K562 (cell line): ENCODE measurements at regions of chr9 and their contacts with region 1.

Region 1: DNA sequence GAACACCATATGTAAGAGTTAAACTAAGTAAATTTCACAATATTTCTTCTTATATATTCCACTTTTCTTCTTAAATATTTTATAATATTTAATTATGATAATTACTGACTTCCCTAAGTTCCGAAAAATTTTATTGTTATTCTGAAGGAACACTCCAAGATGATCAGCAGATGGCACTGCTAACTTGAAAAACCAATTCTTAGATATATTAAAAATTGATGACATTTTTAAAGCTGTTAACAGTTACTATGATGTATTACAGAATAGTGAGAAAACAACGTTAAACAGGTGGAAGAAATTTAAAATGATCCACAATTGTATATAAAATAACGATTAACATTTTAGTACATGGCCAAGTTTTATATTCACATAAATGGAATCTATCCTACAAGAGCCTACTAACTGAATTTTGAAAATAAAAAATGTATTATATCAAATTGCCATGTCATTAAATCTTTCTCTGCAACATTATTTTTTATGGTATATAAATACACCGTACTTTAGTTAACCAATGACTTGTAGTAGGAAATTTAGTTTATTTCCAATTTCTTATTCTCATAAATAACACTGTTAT is 30.1 kb upstream of the MUSK start:
- DNase-seq: no peak
- ATAC-seq: no peak
- H3K4me3 ChIP-seq: no peak overlapping the region
- H3K27ac ChIP-seq: no peak overlapping the region
- H3K4me1 ChIP-seq: no peaks in the 10 kb centered on the region
- H3K27me3 ChIP-seq: no peaks in the 10 kb centered on the region
- CTCF ChIP-seq: peak in 1 of 3 experiments; percentile 9; a peak in 1 of 6 replicates
- EP300 ChIP-seq: no peak
- POLR2A ChIP-seq: no peak
- RAD21 ChIP-seq: peak in 1 of 2 experiments; percentile 30; a peak in 2 of 4 replicates

Region 2: GRCh38 chr9:110410961-110411360 is 227.5 kb before region 1 on chr9:
- CTCF ChIA-PET with region 1: no interaction called
- POLR2A ChIA-PET with region 1: no interaction called
- in situ Hi-C with region 1: no loop called
- intact Hi-C with region 1: no loop called
- DNase-seq: no peak
- ATAC-seq: no peak
- H3K4me3 ChIP-seq: no peak overlapping the region
- H3K27ac ChIP-seq: no peak overlapping the region
- H3K4me1 ChIP-seq: no peaks in the 10 kb centered on the region
- H3K27me3 ChIP-seq: no peaks in the 10 kb centered on the region; a peak in 1 of 5 replicates
- CTCF ChIP-seq: no peak
- EP300 ChIP-seq: no peak
- POLR2A ChIP-seq: no peak
- RAD21 ChIP-seq: no peak

Region 3: DNA sequence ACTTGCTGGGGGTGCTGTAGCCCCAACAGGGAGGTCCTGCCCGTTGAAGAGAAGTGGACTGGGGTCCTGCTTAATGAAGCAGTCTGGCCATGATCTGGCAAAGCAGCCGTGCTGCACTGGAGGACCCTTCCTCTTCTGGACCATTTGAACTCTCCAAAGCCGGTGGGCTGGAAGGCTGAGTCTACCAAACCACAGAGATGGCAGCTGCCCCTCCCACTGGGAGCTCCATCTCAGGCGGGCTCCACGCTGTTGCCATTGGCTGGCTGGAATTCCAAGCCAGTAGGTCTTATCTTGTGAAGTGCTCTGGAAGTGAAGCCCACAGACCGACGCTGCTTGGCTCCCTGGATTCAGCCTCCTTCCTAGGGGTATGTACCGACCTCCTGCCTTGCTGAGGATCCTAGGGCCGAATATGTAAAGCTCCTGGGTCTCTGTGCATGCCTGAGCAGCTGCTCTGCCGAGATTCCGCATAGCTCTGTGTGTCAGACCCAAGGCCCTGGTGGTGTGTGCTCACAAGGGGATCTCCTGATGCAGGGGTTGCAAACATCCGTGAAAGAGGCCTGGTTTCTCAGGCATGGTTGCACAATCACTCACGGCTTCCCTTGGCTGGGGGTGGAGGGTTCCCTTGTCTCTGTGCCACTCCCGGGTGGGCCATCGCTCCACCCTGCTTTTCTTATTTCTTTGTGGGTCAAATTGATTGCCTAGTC is 39.2 kb before region 1 on chr9:
- CTCF ChIA-PET with region 1: no interaction called
- POLR2A ChIA-PET with region 1: no interaction called
- in situ Hi-C with region 1: no loop called
- intact Hi-C with region 1: no loop called
- DNase-seq: no peak
- ATAC-seq: no peak
- H3K4me3 ChIP-seq: no peak overlapping the region
- H3K27ac ChIP-seq: no peak overlapping the region
- H3K4me1 ChIP-seq: no peaks in the 10 kb centered on the region
- H3K27me3 ChIP-seq: no peaks in the 10 kb centered on the region
- CTCF ChIP-seq: no peak
- EP300 ChIP-seq: no peak
- POLR2A ChIP-seq: no peak
- RAD21 ChIP-seq: no peak

Region 4: DNA sequence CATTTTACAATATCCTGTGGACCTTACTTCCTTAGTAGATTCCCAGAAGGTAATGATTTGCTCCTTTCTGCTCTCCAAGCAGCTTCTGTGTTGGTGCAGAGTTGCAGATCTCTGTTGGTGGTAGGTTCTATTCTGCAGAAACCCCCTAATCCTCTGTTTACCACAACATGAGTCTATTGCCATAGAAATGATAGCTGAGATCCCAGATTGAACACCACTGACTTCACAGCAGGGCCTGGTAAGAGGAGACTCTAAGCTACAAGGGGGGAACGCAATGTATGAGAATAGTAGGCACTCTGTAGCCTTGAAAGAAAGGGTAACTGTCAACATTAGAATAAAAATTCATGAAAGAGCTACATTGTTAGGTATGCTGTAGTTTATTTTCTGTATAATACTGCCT is 89.6 kb after region 1 on chr9:
- CTCF ChIA-PET with region 1: no interaction called
- POLR2A ChIA-PET with region 1: no interaction called
- in situ Hi-C with region 1: no loop called
- intact Hi-C with region 1: no loop called
- DNase-seq: no peak
- ATAC-seq: no peak
- H3K4me3 ChIP-seq: no peak overlapping the region
- H3K27ac ChIP-seq: no peak overlapping the region
- H3K4me1 ChIP-seq: no peaks in the 10 kb centered on the region
- H3K27me3 ChIP-seq: no peaks in the 10 kb centered on the region
- CTCF ChIP-seq: no peak
- EP300 ChIP-seq: no peak
- POLR2A ChIP-seq: no peak
- RAD21 ChIP-seq: no peak

Region 5: DNA sequence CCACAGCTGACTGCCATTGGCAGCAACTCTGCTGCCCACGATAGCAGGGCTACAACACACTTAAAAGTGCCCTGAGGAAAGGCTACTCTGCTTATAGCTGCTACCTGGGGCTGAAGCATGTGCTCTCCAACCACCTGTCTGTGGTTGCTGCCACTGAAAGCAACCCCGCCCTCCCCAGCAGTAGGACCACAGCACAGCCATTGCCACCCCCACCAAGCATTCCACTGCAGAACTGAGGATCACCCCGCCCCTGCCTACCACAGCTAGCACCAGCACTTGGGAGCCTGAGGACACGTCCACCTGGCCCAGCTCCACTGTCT is 314.0 kb after region 1 on chr9:
- CTCF ChIA-PET with region 1: no interaction called
- POLR2A ChIA-PET with region 1: no interaction called
- in situ Hi-C with region 1: no loop called
- intact Hi-C with region 1: no loop called
- DNase-seq: no peak
- ATAC-seq: no peak
- H3K4me3 ChIP-seq: no peak overlapping the region
- H3K27ac ChIP-seq: no peak overlapping the region
- H3K4me1 ChIP-seq: no peaks in the 10 kb centered on the region
- H3K27me3 ChIP-seq: no peaks in the 10 kb centered on the region
- CTCF ChIP-seq: no peak
- EP300 ChIP-seq: no peak
- POLR2A ChIP-seq: no peak
- RAD21 ChIP-seq: no peak

Region 6: DNA sequence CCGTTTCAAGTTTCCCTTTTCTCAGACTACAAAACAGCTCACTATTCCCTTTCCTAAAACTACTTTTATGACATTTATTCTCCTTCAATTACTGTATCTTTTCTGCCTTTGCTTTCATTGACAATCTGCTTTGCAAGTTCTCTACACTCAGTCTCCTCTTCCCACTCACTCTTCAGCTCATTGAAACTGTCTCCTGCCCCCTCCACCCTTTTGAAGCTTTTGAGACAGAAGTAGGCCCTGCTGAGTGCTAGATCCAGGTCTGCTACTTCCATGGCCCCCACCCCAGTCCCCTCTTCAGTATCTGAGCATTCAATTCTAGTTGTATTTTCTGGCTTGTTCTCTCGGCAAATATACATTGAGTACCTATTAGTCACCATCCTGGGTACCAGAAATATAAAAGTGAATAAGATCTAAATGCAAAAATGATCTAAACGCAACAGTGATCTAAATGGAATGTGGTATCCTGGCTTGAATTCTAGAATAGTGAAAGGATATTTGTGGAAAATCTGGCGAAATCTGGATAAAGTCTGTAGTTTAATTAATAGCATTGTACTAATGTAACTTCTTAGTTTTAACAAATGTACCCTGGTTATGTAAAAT is 633.1 kb after region 1 on chr9:
- CTCF ChIA-PET with region 1: no interaction called
- POLR2A ChIA-PET with region 1: no interaction called
- in situ Hi-C with region 1: no loop called
- intact Hi-C with region 1: loop called (anchors 10 kb)
- DNase-seq: no peak
- ATAC-seq: no peak
- H3K4me3 ChIP-seq: no peak overlapping the region
- H3K27ac ChIP-seq: no peak overlapping the region
- H3K4me1 ChIP-seq: no peaks in the 10 kb centered on the region
- H3K27me3 ChIP-seq: no peaks in the 10 kb centered on the region
- CTCF ChIP-seq: no peak
- EP300 ChIP-seq: no peak
- POLR2A ChIP-seq: no peak
- RAD21 ChIP-seq: no peak